IMR-90 (cell line): ENCODE measurements at regions of chr7 and their contacts with region 1.

Region 1: GRCh38 chr7:131196803-131197202 is 130.9 kb upstream of the MKLN1 start:
- DNase-seq: peak; percentile 49
- ATAC-seq: peak; percentile 76
- H3K4me3 ChIP-seq: no peak overlapping the region
- H3K27ac ChIP-seq: no peak overlapping the region
- H3K4me1 ChIP-seq: no peaks in the 10 kb centered on the region
- H3K27me3 ChIP-seq: no peaks in the 10 kb centered on the region
- CTCF ChIP-seq: no peak
- POLR2A ChIP-seq: no peak
- RAD21 ChIP-seq: no peak

Region 2: GRCh38 chr7:130951303-130951975 is 245.4 kb before region 1 on chr7:
- CTCF ChIA-PET with region 1: no interaction called
- POLR2A ChIA-PET with region 1: no interaction called
- dilution Hi-C with region 1: no loop called
- in situ Hi-C with region 1: no loop called
- intact Hi-C with region 1: no loop called
- DNase-seq: no peak
- ATAC-seq: peak; percentile 36
- H3K4me3 ChIP-seq: no peak overlapping the region
- H3K27ac ChIP-seq: peak overlapping the region; percentile 38
- H3K4me1 ChIP-seq: peaks cover 20% of the 10 kb centered on the region
- H3K27me3 ChIP-seq: no peaks in the 10 kb centered on the region
- CTCF ChIP-seq: no peak
- POLR2A ChIP-seq: no peak
- RAD21 ChIP-seq: no peak

Region 3: DNA sequence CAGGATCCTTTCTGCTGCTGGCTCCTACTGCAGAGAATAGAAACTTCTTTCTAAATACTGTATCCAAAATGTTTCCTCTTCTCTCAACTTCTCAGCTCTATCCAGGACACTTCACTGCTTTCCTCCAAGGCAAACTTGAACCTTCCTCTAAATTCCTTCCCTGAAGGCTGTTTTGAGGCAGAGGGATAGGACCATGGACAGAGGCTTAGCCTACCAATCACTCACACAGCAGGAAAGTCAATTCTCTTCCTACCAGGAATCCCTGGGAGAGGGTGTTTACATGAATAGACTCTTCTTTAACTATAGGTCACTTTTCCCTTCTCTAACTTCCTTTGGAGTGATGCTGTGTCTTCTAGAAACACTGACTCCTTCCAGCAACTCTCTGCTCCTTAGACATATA is 15.3 kb after region 1 on chr7:
- CTCF ChIA-PET with region 1: no interaction called
- POLR2A ChIA-PET with region 1: no interaction called
- dilution Hi-C with region 1: no loop called
- in situ Hi-C with region 1: no loop called
- intact Hi-C with region 1: loop called (anchors 1 kb)
- DNase-seq: peak; percentile 43
- ATAC-seq: peak; percentile 60
- H3K4me3 ChIP-seq: no peak overlapping the region
- H3K27ac ChIP-seq: no peak overlapping the region
- H3K4me1 ChIP-seq: no peaks in the 10 kb centered on the region
- H3K27me3 ChIP-seq: no peaks in the 10 kb centered on the region; the same call in 1 of the 2 replicates
- CTCF ChIP-seq: no peak
- POLR2A ChIP-seq: no peak
- RAD21 ChIP-seq: no peak

Region 4: DNA sequence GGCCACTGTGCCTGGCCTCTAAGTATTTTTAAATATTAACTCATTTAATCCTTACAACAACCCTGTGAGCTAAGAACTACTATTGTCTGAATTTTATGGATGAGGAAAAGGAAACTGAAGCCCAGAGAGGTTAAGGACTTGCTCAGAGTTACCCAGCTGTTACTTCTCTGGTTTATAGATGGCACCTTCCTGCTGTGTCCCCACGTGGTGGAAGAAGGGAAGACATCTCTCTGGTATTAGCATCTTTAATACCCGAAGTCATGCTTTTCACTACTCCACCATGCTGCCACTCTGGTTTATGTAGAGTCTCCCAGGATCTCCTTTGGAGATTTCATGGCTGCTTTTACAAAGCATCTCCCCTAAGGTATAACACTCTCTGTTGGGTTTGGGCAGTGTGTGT is 25.4 kb after region 1 on chr7:
- CTCF ChIA-PET with region 1: no interaction called
- POLR2A ChIA-PET with region 1: no interaction called
- dilution Hi-C with region 1: no loop called
- in situ Hi-C with region 1: no loop called
- intact Hi-C with region 1: no loop called
- DNase-seq: no peak
- ATAC-seq: no peak
- H3K4me3 ChIP-seq: no peak overlapping the region
- H3K27ac ChIP-seq: no peak overlapping the region
- H3K4me1 ChIP-seq: peaks cover 4% of the 10 kb centered on the region
- H3K27me3 ChIP-seq: no peaks in the 10 kb centered on the region
- CTCF ChIP-seq: 0 out of 2 replicates have a peak, but pooled peaks have one; percentile 7
- POLR2A ChIP-seq: no peak
- RAD21 ChIP-seq: no peak